ENCODE measurements at regions of chr13 and their contacts with region 1.

Region 1: GRCh38 chr13:37295071-37295470 is 189.6 kb upstream of the CSNK1A1L start:
- DNase-seq: peak; percentile 85

Region 2: DNA sequence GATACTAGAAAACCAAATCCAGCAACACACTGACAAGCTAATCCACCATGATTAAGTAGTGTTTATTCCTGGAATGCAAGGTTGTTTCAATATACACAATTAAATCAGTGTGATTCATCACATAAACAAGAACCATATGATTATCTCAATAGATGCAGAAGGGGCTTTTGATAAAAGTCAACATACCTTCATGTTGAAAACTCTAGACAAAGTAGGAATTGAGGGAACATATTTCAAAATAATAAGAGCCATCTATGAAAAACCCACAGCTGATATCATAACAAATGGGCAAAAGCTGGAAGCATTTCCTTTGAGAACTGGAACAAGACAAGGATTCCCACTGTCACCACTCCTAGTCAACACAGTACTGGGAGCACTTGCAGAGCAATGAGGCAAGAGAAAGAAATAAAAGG is 24.0 kb after region 1 on chr13:
- intact Hi-C with region 1: loop called in 1 of 2 experiments (anchors 1 kb)
- DNase-seq: no peak

Measured in posterior vena cava (tissue), 2 donors.